ENCODE measurements at regions of chr4 and their contacts with region 1.

Region 1: DNA sequence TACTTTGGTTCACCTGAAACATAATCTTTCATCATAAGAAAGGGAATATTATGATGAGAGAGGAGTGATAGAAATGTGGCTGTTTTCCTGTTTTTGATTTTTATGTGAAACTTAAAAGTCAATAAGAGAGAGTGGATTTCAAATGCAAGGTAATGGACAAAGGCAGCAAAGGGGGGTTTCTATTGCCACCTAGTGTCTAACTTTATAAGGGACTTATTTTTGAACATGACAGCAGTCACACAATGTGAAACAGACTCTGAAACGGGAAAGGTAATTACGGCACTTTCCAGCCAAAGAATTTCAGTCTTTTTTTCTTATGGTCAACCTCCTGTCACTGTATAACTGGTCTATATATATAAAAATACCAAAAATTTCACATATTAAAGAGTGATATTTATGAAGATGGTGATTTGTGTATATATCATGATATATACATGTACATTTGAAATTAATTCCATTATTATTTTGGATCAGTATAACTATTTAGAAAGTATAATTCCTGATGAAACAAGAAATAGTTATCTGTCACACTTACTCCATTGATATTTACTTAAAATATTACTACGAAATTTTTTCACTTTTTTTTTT is 127.1 kb downstream of the FBXO8 start:
- DNase-seq: peak in 2 of 9 experiments; percentile 25 to 29
- ATAC-seq: no peak
- H3K4me3 ChIP-seq: no peak overlapping the region
- H3K4me3 Mint-ChIP-seq: no peak overlapping the region
- H3K27ac ChIP-seq: no peak overlapping the region
- H3K27ac Mint-ChIP-seq: no peak overlapping the region
- H3K4me1 ChIP-seq: no peaks in the 10 kb centered on the region
- H3K4me1 Mint-ChIP-seq: no peaks in the 10 kb centered on the region
- H3K27me3 ChIP-seq: peaks cover 0 to 3% of the 10 kb centered on the region in 2 experiments
- H3K27me3 Mint-ChIP-seq: peaks cover 18% of the 10 kb centered on the region
- CTCF ChIP-seq: peak; percentile 57

Region 2: DNA sequence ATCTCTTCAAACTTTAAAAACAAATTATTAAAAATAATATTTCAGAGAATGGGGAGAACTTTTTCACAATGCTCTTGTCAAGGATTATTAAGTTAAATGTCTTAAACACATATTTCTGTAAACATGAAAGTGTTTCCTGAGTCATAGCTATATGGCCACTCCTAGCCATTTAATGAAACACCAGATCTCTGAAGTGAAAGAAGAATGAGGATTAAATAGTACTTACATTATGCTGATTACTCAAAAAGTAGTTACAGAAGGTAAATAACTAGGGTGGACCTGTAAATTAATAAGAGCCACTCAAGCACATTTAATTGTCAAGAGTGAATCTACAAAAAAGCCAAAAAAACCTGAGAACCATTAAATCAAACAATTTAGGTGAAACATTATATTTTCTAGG is 1045.3 kb before region 1 on chr4:
- CTCF ChIA-PET with region 1: no interaction called
- POLR2A ChIA-PET with region 1: no interaction called
- intact Hi-C with region 1: no loop called
- DNase-seq: no peak
- ATAC-seq: no peak
- H3K4me3 ChIP-seq: no peak overlapping the region
- H3K4me3 Mint-ChIP-seq: no peak overlapping the region
- H3K27ac ChIP-seq: no peak overlapping the region
- H3K27ac Mint-ChIP-seq: no peak overlapping the region
- H3K4me1 ChIP-seq: no peaks in the 10 kb centered on the region
- H3K4me1 Mint-ChIP-seq: no peaks in the 10 kb centered on the region
- H3K27me3 ChIP-seq: no peaks in the 10 kb centered on the region
- H3K27me3 Mint-ChIP-seq: peaks cover 2% of the 10 kb centered on the region
- CTCF ChIP-seq: no peak

Region 3: DNA sequence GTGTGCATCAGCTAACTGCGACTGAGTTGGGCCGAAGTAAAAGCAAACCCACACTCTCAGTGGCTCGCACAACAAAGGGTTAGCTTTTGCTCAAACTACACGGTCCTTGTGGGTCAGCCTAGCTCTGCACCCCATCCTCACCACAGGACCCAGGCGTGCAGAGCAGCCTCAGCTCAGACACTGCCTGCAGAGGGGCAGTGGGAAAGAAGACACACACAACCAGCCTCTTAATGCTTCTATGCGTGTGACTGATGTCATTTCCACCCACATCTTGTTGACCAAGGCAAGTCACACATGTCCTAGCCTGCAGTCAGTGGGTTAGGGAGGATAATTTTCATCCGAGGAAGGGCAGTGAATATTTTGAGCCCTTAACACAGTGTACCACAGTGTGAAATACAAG is 862.7 kb before region 1 on chr4:
- CTCF ChIA-PET with region 1: no interaction called
- POLR2A ChIA-PET with region 1: no interaction called
- intact Hi-C with region 1: loop called in 1 of 2 experiments (anchors 10 kb)
- DNase-seq: no peak
- ATAC-seq: no peak
- H3K4me3 ChIP-seq: no peak overlapping the region
- H3K4me3 Mint-ChIP-seq: no peak overlapping the region
- H3K27ac ChIP-seq: no peak overlapping the region
- H3K27ac Mint-ChIP-seq: no peak overlapping the region
- H3K4me1 ChIP-seq: no peaks in the 10 kb centered on the region
- H3K4me1 Mint-ChIP-seq: peaks cover 8% of the 10 kb centered on the region
- H3K27me3 ChIP-seq: no peaks in the 10 kb centered on the region
- H3K27me3 Mint-ChIP-seq: no peaks in the 10 kb centered on the region
- CTCF ChIP-seq: no peak

Region 4: DNA sequence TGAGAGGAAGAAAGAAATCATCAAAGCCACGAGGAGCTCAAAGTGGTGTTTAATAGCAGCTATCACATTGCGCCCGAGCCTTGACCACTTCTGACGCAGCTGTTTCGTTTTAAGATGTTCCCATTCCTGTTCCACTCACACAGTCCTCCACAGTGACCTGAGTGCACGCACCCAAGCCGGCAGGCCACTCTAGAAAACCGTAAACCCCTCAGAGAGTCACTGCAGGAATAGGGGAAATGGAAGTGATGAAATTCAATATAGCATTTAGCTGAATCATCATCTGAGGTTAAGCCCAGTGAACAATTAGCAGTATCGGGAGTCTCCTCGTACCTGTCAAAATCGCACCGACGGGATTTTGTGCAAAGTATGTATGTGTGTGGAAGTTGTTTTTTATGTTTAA is 608.4 kb before region 1 on chr4:
- CTCF ChIA-PET with region 1: no interaction called
- POLR2A ChIA-PET with region 1: no interaction called
- intact Hi-C with region 1: no loop called
- DNase-seq: no peak
- ATAC-seq: no peak
- H3K4me3 ChIP-seq: no peak overlapping the region
- H3K4me3 Mint-ChIP-seq: no peak overlapping the region
- H3K27ac ChIP-seq: no peak overlapping the region
- H3K27ac Mint-ChIP-seq: no peak overlapping the region
- H3K4me1 ChIP-seq: no peaks in the 10 kb centered on the region
- H3K4me1 Mint-ChIP-seq: no peaks in the 10 kb centered on the region
- H3K27me3 ChIP-seq: peaks cover 0 to 2% of the 10 kb centered on the region in 2 experiments
- H3K27me3 Mint-ChIP-seq: peaks cover 51% of the 10 kb centered on the region
- CTCF ChIP-seq: no peak